PC-3 (cell line): ENCODE measurements at regions of chr5 and their contacts with region 1.

Region 1: DNA sequence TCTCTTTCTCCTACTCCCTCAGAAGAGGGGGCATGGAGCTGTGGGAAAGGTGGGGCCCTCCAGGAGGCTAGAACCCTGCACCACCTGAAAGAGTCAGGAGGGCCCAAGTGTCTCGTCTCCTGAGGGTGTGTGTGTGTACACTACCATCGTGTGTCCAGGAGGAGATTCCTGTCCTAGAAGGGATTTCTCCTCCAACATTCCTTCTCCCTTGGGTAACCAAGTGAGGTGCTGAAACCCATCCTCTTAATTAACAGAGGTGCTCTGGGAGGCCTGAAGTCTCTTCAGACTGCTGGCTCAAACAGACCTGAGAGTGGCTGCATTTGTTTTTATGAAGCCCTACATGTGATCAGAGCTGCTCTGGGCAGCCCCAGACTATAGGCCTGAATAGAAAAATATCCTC is 61.1 kb upstream of the FAM169A start:
- DNase-seq: no peak
- ATAC-seq: no peak
- H3K4me3 ChIP-seq: no peak overlapping the region
- H3K27ac ChIP-seq: no peak overlapping the region
- H3K4me1 ChIP-seq: no peaks in the 10 kb centered on the region
- H3K27me3 ChIP-seq: no peaks in the 10 kb centered on the region
- CTCF ChIP-seq: no peak

Region 2: GRCh38 chr5:74903165-74903787 is 24.1 kb before region 1 on chr5:
- CTCF ChIA-PET with region 1: interaction called, 14 read pairs
- POLR2A ChIA-PET with region 1: no interaction called
- intact Hi-C with region 1: no loop called
- DNase-seq: peak; percentile 64
- ATAC-seq: peak; percentile 96
- H3K4me3 ChIP-seq: no peak overlapping the region
- H3K27ac ChIP-seq: no peak overlapping the region
- H3K4me1 ChIP-seq: no peaks in the 10 kb centered on the region
- H3K27me3 ChIP-seq: no peaks in the 10 kb centered on the region
- CTCF ChIP-seq: peak; percentile 72

Region 3: GRCh38 chr5:75156585-75156984 is 229.2 kb after region 1 on chr5:
- CTCF ChIA-PET with region 1: interaction called, 11 read pairs
- POLR2A ChIA-PET with region 1: no interaction called
- intact Hi-C with region 1: no loop called
- DNase-seq: peak; percentile 19
- ATAC-seq: no peak
- H3K4me3 ChIP-seq: no peak overlapping the region
- H3K27ac ChIP-seq: no peak overlapping the region
- H3K4me1 ChIP-seq: peaks cover 6% of the 10 kb centered on the region; the same call in 1 of the 2 replicates
- H3K27me3 ChIP-seq: no peaks in the 10 kb centered on the region
- CTCF ChIP-seq: peak; percentile 27; the same call in 1 of the 2 replicates

Region 4: GRCh38 chr5:75260708-75261107 is 333.4 kb after region 1 on chr5:
- CTCF ChIA-PET with region 1: interaction called, 11 read pairs
- POLR2A ChIA-PET with region 1: no interaction called
- intact Hi-C with region 1: loop called (anchors 1 kb)
- DNase-seq: no peak
- ATAC-seq: no peak
- H3K4me3 ChIP-seq: no peak overlapping the region
- H3K27ac ChIP-seq: no peak overlapping the region
- H3K4me1 ChIP-seq: no peaks in the 10 kb centered on the region
- H3K27me3 ChIP-seq: no peaks in the 10 kb centered on the region
- CTCF ChIP-seq: no peak

Region 5: GRCh38 chr5:75265731-75266130 is 338.4 kb after region 1 on chr5:
- CTCF ChIA-PET with region 1: interaction called, 11 read pairs
- POLR2A ChIA-PET with region 1: no interaction called
- intact Hi-C with region 1: loop called (anchors 1 kb)
- DNase-seq: peak; percentile 56
- ATAC-seq: peak; percentile 33; the same call in 1 of the 2 replicates
- H3K4me3 ChIP-seq: no peak overlapping the region
- H3K27ac ChIP-seq: no peak overlapping the region
- H3K4me1 ChIP-seq: no peaks in the 10 kb centered on the region
- H3K27me3 ChIP-seq: no peaks in the 10 kb centered on the region
- CTCF ChIP-seq: peak; percentile 64

Region 6: GRCh38 chr5:75330404-75330803 is 403.1 kb after region 1 on chr5:
- CTCF ChIA-PET with region 1: interaction called, 11 read pairs
- POLR2A ChIA-PET with region 1: no interaction called
- intact Hi-C with region 1: no loop called
- DNase-seq: no peak
- ATAC-seq: no peak
- H3K4me3 ChIP-seq: no peak overlapping the region
- H3K27ac ChIP-seq: no peak overlapping the region
- H3K4me1 ChIP-seq: no peaks in the 10 kb centered on the region
- H3K27me3 ChIP-seq: no peaks in the 10 kb centered on the region
- CTCF ChIP-seq: no peak